ENCODE measurements at regions of chr5 and their contacts with region 1.

Region 1: DNA sequence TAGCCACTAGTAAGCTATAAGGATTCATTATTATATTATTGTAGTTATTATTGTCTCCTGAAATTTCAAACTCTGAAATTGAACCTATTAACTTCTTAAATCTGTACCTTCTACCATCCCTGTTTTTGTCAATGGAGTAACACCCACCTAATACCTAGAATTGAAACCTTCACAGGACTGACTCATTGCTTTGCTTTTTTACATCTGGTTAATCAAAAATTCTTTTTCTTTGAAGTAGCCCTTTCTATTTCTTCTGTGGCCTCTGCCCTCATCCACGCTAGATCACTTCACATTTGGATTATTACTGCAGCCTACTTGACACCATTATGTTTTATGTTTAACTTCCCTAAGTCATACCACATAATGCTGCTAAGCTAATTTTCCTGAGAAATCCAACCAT is 35.6 kb downstream of the RBM27 start:
- DNase-seq: no peak
- H3K4me3 ChIP-seq: no peak overlapping the region
- H3K27ac ChIP-seq: peak overlapping the region; percentile 54 to 76
- H3K4me1 ChIP-seq: peaks cover 0 to 39% of the 10 kb centered on the region in 2 donors
- H3K27me3 ChIP-seq: no peaks in the 10 kb centered on the region
- CTCF ChIP-seq: no peak

Region 2: DNA sequence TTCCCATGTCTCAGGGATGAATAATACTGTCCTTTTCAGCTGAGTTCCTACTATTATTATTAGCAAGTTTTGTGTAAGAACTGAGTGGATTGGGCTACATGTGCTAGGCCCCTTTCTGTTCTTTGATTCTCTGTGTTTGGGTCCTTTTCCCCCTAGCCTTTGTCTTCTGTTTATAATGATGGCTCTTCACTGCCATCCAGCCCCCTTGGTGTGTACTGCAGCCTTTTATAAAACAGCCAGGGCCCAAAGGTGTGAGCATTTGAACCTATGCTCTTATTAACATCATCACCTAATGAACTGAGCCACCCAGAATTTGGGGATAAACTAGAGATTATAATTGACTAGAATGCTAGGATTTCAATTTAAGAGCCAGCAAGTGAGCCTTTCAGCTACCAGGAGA is 186.2 kb before region 1 on chr5:
- intact Hi-C with region 1: no loop called
- DNase-seq: no peak
- H3K4me3 ChIP-seq: no peak overlapping the region
- H3K27ac ChIP-seq: no peak overlapping the region
- H3K4me1 ChIP-seq: no peaks in the 10 kb centered on the region
- H3K27me3 ChIP-seq: no peaks in the 10 kb centered on the region
- CTCF ChIP-seq: no peak

Region 3: GRCh38 chr5:146188358-146188757 is 50.6 kb before region 1 on chr5:
- intact Hi-C with region 1: loop called (anchors 1 kb)
- DNase-seq: no peak
- H3K4me3 ChIP-seq: no peak overlapping the region
- H3K27ac ChIP-seq: no peak overlapping the region
- H3K4me1 ChIP-seq: no peaks in the 10 kb centered on the region
- H3K27me3 ChIP-seq: no peaks in the 10 kb centered on the region
- CTCF ChIP-seq: no peak

Region 4: GRCh38 chr5:146203011-146203871 is 35.7 kb before region 1 on chr5 and contains the start of gene RBM27:
- intact Hi-C with region 1: loop called (anchors 1 kb)
- DNase-seq: peak; percentile 93 to 99
- H3K4me3 ChIP-seq: peak within 1 kb of the TSS; percentile 93 to 94
- H3K27ac ChIP-seq: peak within 1 kb of the TSS; percentile 93
- H3K4me1 ChIP-seq: peaks cover 0 to 19% of the 10 kb centered on the region in 2 donors
- H3K27me3 ChIP-seq: no peaks in the 10 kb centered on the region
- CTCF ChIP-seq: no peak
- total RNA-seq, gene RBM27: 5.9 TPM

Region 5: DNA sequence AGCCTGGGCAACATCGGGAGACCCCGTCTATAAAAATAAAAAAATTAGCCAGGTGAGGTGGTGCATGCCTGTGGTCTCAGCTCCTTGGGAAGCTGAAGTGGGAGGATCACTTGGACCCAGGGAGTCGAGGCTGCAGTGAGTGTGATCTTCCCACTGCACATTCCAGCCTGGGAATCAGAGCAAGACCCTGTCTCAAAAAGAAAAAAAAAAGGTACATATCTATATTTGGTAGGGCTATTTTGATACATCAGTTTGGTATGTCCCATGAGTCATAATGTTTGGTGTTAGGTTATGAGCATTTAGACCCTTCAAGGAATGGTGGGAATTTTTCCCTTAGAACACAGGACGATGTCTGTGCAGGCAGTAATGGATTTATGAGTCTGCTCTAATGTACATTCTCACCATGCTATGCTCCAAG is 44.4 kb after region 1 on chr5:
- intact Hi-C with region 1: loop called (anchors 5 kb)
- DNase-seq: no peak
- H3K4me3 ChIP-seq: no peak overlapping the region
- H3K27ac ChIP-seq: peak overlapping the region; percentile 39 to 47
- H3K4me1 ChIP-seq: peaks cover 0 to 12% of the 10 kb centered on the region in 2 donors
- H3K27me3 ChIP-seq: no peaks in the 10 kb centered on the region
- CTCF ChIP-seq: no peak

Measured in ascending aorta (tissue), 2 donors.